AG04450 (cell line): ENCODE measurements at regions of chr20 and their contacts with region 1.

Region 1: GRCh38 chr20:33696448-33696847 is 10.3 kb upstream of the E2F1 start:
- DNase-seq: no peak
- H3K4me3 ChIP-seq: no peak overlapping the region
- H3K27ac ChIP-seq: no peak overlapping the region
- H3K27me3 ChIP-seq: no peaks in the 10 kb centered on the region
- CTCF ChIP-seq: no peak

Region 2: DNA sequence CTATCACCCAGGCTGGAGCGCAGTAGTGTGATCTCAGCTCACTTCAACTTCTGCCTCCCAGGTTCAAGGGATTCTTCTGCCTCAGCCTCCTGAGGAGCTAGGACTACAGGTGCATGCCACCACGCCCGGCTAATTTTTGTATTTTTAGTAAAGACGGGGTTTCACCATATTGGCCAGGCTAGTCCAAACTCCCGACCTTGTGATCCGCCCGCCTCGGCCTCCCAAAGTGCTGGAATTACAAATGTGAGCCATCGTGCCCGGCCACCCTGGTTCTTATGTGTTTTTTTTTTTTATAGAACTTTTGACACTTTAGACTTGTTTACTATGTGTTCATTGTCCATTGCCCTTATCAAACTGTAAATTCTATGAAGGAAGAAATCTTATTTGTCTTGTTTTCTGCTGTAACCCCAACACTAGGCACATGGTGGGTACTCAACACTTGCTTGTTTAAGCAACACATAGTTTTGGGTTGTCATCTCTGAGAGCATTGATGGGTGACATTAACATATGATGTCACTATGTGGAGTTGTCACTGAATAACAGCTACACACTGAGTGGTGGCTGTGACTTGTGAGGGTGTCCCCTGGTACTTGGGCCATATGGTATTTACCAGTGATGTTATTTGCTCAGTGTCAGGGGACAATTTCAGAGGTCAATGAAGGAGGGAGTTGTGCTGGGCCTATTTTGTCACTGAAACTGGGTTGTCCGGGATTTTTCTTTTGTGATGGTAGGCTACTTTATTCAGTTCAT is 25.1 kb after region 1 on chr20:
- CTCF ChIA-PET with region 1: no interaction called
- POLR2A ChIA-PET with region 1: interaction called, 10 read pairs
- DNase-seq: no peak
- H3K4me3 ChIP-seq: no peak overlapping the region
- H3K27ac ChIP-seq: no peak overlapping the region
- H3K27me3 ChIP-seq: no peaks in the 10 kb centered on the region
- CTCF ChIP-seq: no peak